HepG2 (cell line): ENCODE measurements at regions of chr2 and their contacts with region 1.

Region 1: GRCh38 chr2:215435809-215436704 is at the start of gene FN1:
- DNase-seq: peak; percentile 91
- ATAC-seq: peak; percentile 92
- H3K4me3 ChIP-seq: peak within 1 kb of the TSS; percentile 86 to 99 (median 95)
- H3K27ac ChIP-seq: peak within 1 kb of the TSS; percentile 71
- H3K4me1 ChIP-seq: peaks cover 71% of the 10 kb centered on the region
- H3K27me3 ChIP-seq: no peaks in the 10 kb centered on the region; a peak in 1 of 5 replicates
- CTCF ChIP-seq: no peak
- EP300 ChIP-seq: peak in 1 of 2 experiments; percentile 27; a peak in 1 of 4 replicates
- POLR2A ChIP-seq: peak; percentile 97 to 99
- RAD21 ChIP-seq: no peak; the same call in 1 of the 2 replicates
- total RNA-seq, gene FN1: 1,029 and 1,847 TPM in 2 replicates

Region 2: DNA sequence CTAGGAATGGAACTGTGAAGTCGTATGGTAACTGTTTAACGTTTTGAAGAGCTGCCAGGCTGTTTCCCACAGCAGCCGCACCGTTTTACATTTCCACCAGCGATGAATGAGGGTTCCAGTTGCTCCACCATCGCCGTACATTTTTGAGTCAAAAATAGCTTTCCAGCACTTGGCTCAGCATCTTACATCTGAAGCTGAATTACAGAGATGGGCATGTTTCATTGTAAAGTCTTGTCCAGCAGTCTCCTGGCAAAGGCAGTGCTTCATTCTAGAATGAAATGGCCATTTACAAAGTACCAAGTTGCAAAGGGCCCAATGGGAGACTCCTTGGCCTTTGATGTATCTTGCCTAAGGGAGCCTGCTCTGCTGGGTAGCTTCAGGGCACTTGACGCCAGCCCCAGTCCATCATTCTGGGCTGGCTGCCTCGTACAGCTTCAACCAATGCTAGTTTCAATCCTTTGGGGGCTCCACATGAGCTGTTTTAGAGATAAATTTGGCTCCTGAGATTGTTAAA is 79.1 kb before region 1 on chr2:
- CTCF ChIA-PET with region 1: no interaction called
- POLR2A ChIA-PET with region 1: no interaction called
- in situ Hi-C with region 1: no loop called
- intact Hi-C with region 1: no loop called
- DNase-seq: no peak
- ATAC-seq: peak; percentile 29
- H3K4me3 ChIP-seq: no peak overlapping the region
- H3K27ac ChIP-seq: no peak overlapping the region
- H3K4me1 ChIP-seq: no peaks in the 10 kb centered on the region
- H3K27me3 ChIP-seq: no peaks in the 10 kb centered on the region
- CTCF ChIP-seq: no peak
- EP300 ChIP-seq: no peak
- POLR2A ChIP-seq: no peak
- RAD21 ChIP-seq: no peak

Region 3: DNA sequence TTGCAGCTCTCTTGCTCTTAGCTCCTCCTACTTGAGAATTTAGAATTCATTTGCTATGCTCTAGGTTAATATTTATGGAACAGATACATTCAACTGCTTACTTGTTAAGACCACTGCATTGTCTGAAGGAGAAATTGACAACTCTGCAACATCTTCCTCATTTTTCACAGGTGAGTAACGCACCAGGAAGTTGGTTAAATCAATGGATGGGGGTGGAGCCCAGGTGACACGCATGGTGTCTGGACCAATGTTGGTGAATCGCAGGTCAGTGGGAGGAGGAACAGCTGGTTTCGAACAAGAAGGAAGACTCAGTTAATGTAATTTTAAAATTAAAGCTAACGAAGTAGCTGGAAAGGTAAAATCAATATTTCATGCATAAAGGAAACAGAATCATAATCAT is 44.5 kb before region 1 on chr2:
- CTCF ChIA-PET with region 1: no interaction called
- POLR2A ChIA-PET with region 1: no interaction called
- in situ Hi-C with region 1: no loop called
- intact Hi-C with region 1: no loop called
- DNase-seq: no peak
- ATAC-seq: no peak
- H3K4me3 ChIP-seq: no peak overlapping the region
- H3K27ac ChIP-seq: peak overlapping the region; percentile 2
- H3K4me1 ChIP-seq: no peaks in the 10 kb centered on the region
- H3K27me3 ChIP-seq: no peaks in the 10 kb centered on the region
- CTCF ChIP-seq: no peak
- EP300 ChIP-seq: no peak
- POLR2A ChIP-seq: peak in 1 of 2 experiments; percentile 43; a peak in 2 of 4 replicates
- RAD21 ChIP-seq: no peak

Region 4: GRCh38 chr2:215498431-215498830 is 62.4 kb after region 1 on chr2:
- CTCF ChIA-PET with region 1: no interaction called
- POLR2A ChIA-PET with region 1: no interaction called
- in situ Hi-C with region 1: no loop called
- intact Hi-C with region 1: no loop called
- DNase-seq: peak; percentile 84
- ATAC-seq: peak; percentile 91
- H3K4me3 ChIP-seq: no peak overlapping the region
- H3K27ac ChIP-seq: peak overlapping the region; percentile 38
- H3K4me1 ChIP-seq: peaks cover 29% of the 10 kb centered on the region
- H3K27me3 ChIP-seq: no peaks in the 10 kb centered on the region
- CTCF ChIP-seq: 0 out of 2 replicates have a peak, but pooled peaks have one; percentile 7
- EP300 ChIP-seq: peak in 1 of 2 experiments; percentile 69; a peak in 1 of 4 replicates
- POLR2A ChIP-seq: no peak
- RAD21 ChIP-seq: no peak

Region 5: GRCh38 chr2:215693193-215693998 is 257.3 kb after region 1 on chr2:
- CTCF ChIA-PET with region 1: no interaction called
- POLR2A ChIA-PET with region 1: interaction called, 10 read pairs
- in situ Hi-C with region 1: no loop called
- intact Hi-C with region 1: no loop called
- DNase-seq: peak; percentile 93
- ATAC-seq: peak; percentile 92
- H3K4me3 ChIP-seq: peak overlapping the region in 1 of 3 experiments; percentile 13; a peak in 1 of 6 replicates
- H3K27ac ChIP-seq: peak overlapping the region; percentile 80
- H3K4me1 ChIP-seq: peaks cover 47% of the 10 kb centered on the region
- H3K27me3 ChIP-seq: no peaks in the 10 kb centered on the region
- CTCF ChIP-seq: no peak
- EP300 ChIP-seq: peak in 1 of 2 experiments; percentile 96; a peak in 2 of 4 replicates
- POLR2A ChIP-seq: peak in 1 of 2 experiments; percentile 47; a peak in 1 of 4 replicates
- RAD21 ChIP-seq: no peak